ENCODE measurements at regions of chr18 and their contacts with region 1.

Region 1: DNA sequence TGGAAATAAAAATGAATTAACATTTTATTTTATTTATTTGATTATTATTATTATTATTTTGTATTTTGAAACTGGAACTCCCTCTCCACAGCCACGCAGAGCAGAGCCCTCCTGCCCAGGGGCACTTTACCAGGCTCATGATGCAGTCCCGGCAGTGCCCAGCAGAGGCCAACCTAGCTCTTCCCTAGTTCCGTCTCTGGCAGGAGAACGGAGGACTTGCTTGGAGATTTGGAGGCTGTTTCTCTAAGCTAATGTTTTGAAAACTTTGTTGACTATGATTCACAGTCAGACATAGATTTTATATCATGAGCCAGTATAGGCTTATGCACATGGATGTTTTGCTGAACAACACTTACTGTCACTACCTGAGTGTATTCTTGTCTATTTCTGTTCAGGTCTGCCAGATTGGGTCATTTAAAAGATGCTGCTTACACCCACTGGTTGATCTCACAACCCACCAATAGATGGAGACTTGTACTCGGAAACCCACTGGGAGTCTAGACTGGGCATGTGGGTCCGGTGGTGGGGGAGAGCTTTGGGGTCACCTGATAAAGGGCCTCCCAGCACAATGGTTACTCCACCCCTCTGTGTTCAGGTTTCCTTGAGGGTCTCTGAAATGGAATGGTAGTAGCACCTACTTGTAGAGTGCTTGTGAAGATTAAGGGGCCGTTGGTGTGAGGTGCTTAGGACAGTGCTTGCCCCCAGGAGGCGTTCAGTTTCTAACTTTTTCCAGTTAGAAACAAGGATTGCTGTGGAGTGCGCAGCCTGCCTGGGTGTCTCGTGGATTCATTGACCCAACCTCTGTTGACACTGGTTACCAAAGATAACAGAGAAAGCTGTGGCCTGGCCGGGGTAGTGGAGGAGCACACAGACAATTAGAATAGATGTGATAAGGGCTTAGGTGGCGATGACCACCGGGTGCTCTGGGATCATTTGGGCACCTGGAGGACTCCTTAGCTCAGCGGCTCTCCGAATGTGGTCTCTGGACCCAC is 177.3 kb downstream of the HAUS1 start:
- DNase-seq: peak; percentile 77
- ATAC-seq: peak; percentile 92

Region 2: DNA sequence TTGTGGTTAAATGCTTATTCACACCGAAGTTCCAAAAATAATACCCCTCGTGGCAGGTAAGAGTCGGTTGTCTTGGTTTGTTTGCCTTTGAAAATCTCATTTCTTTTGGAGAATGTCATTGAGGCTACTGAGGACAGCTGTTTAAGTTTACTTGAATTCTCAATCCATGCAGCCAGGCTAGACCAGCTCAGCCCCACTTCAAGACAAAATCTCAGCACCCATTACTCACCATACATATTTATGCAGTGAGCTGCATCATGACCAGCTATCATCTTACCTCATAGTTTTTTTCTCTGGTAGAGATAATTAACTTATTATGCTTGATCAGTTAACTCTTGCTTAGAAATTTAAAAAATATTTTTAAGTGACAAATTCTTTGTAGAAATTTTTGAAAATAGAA is 61.4 kb before region 1 on chr18:
- intact Hi-C with region 1: no loop called
- DNase-seq: no peak
- ATAC-seq: no peak

Region 3: DNA sequence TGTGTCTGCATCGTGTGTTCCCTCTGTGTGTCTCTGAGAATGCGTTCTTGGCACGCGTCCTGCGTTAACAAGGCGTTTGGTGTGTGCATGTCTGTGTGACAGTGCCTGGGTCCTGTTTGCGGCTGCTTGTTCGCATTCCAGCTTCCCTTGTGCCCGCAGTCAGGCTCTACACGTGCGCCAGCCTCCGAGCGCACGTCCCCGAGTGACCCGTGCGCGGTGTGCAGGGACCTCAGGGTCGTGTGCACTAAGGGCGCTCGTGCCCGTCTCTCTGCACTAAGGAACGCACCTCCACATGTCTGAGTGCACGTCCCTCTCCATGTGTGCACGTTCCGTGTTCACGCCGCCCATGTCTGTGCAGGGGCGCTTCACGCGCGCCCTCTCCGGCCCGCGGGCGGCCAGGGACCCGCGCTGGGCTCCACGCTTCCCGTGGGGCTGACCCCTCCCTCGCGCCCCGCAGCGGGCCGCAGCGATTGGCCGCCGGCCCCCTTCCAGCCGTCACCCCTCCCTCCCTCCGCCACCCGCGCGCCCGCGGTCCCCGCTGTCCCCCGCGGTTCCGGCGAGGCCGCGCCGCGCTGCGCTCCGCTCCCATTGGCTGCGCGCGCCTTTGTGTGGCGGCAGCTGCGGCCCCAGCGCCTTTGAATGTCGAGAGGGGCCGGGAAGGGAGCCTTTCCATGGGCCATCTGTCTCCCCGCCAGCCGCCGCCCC is 52.1 kb after region 1 on chr18:
- intact Hi-C with region 1: loop called (anchors 5 kb)
- DNase-seq: peak; percentile 66
- ATAC-seq: peak; percentile 87

Region 4: DNA sequence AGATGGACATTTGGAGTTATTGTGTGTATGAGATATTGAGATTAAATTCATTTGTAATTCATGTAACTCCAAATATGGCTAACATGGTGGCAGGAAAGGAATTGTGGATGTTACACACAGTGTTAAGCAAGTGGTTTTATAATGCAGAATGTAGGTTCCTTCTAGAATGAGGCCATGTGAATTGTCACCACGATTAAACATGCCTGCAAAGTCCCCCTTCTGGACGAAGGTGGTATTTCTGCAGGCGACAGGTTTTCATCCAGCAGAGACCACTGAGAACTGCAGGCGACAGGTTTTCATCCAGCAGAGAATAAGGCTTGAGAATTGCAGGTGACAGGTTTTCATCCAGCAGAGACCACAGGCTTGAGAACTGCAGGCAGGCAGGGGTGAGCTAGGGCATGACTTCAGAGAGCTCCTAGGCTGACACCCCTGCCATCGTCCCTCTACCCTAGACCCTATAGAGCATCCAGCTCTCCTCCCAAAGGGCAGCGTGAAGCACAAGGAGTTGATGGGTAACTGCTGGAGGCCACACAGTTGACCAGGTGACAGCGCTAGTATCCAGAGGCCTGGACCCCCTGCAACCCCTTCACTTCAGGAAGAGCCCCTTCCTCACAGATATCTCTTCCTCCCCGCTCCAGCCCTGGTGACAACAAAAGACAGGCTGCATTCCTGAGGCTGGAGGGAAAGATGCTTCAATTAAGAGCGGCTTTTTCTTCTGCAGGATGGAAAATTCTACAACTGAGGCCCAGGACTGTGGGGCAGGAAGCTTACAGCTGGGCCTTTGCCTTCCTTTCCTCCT is 199.8 kb after region 1 on chr18:
- intact Hi-C with region 1: loop called (anchors 5 kb)
- DNase-seq: no peak
- ATAC-seq: peak; percentile 76

Region 5: GRCh38 chr18:46518438-46518837 is 237.0 kb after region 1 on chr18:
- intact Hi-C with region 1: loop called (anchors 10 kb)
- DNase-seq: peak; percentile 71
- ATAC-seq: peak; percentile 95

Region 6: GRCh38 chr18:46657115-46657955 is 375.9 kb after region 1 on chr18 and contains the start of gene LOXHD1:
- intact Hi-C with region 1: loop called (anchors 5 kb)
- DNase-seq: no peak
- ATAC-seq: no peak
- total RNA-seq, gene LOXHD1: 0.62 TPM

Measured in Right ventricle myocardium superior (tissue), 1 donor.